AG04449 (cell line): ENCODE measurements at regions of chr12 and their contacts with region 1.

Region 1: DNA sequence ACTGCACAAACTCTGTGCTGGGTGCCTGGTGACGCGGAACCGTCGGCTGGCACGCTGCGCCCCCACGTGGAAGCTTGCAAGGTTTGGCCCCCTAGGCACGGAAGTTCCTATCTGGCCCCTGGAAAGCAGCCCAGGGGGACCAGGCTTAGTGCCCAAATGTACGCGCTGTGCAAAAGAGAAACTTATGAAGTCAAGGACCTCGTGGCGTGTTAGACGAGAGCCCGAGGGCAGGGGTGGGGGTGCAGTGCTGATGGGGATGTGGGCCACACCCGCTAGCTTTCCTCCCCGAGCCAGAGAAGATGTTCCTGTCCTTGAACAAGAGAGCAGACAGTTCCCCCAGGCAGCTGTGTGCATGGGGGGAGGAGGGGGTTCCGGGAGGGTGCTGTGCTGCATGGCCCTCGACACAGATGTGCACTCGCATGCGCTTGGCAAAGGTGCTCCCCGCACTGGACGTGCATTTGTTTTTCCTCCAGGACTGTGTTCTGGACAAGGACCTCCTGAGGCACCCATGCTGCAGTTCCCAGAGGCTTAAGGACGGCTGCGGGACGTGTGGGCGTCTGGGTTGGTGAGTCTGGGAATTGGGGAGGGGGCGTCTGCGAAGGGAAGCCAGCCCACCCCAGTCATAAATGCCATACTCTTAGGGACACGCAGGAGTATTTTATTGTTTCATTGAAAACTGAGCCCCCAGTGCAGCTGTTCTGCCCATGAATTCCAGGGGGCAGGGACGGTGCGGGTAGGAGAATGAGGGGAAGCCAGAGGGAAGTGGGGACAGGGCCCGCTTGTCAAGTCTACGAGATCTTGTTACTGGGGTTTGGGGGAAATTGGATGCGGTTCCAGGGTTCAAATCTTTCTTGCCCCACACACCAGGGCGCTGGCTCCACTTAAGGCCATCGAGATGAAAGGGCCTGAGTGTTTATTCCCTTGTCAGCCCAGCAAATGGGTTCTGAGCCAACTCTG is 80.0 kb downstream of the NTF3 start:
- DNase-seq: no peak
- H3K4me3 ChIP-seq: no peak overlapping the region
- CTCF ChIP-seq: peak; percentile 80

Region 2: GRCh38 chr12:5318874-5319273 is 193.0 kb before region 1 on chr12:
- CTCF ChIA-PET with region 1: no interaction called
- POLR2A ChIA-PET with region 1: no interaction called
- DNase-seq: peak; percentile 31
- H3K4me3 ChIP-seq: no peak overlapping the region
- CTCF ChIP-seq: no peak

Region 3: GRCh38 chr12:5499566-5500330 is 12.2 kb before region 1 on chr12:
- CTCF ChIA-PET with region 1: interaction called, 11 read pairs
- POLR2A ChIA-PET with region 1: no interaction called
- DNase-seq: peak; percentile 94
- H3K4me3 ChIP-seq: no peak overlapping the region
- CTCF ChIP-seq: no peak

Region 4: DNA sequence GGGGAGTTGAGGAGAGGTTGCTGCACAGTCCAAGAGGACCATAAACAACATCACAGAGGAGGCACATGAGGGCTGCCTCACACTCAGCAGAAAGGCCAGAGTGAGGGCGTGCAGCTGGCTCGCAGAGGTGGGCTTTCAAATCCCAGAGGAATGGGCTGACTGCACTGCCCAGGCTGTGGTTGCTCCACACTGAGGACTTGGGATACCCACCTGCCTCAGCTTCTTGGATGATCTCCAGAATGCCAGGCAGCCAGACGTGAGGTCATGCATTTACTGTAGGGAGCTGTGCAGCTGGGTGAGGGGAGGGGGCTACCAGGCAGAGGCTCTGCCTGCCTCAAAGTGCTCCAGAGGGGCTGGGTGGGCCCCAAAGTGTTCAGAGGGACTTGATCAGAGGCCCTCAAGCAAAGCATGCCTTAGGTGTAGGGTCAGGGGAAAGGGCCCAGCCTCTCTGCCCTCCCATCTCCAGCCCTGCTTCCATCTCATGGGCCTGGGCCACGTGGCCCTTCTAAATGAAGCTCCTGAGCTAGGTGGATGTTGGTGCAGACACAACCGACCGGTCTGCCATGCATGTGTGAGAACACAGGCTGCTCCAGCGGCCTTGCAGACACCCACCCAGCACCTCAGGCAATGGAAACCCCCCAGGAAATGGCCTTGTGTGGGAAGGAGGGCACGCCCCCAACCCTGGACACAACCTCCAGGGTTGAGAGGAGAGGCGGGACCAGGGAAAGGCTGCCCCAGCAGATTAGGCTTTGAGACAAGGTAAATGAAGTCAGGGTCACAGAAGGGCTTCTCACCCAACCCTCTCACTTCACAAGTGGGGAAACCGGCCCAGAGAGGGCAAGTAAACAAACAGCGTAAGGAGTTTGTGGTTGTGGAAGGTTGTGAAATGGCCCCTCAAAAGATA is 10.8 kb after region 1 on chr12:
- CTCF ChIA-PET with region 1: interaction called, 14 read pairs
- POLR2A ChIA-PET with region 1: no interaction called
- DNase-seq: no peak
- H3K4me3 ChIP-seq: no peak overlapping the region
- CTCF ChIP-seq: no peak